ENCODE measurements at regions of chr1 and their contacts with region 1.

Region 1: GRCh38 chr1:39538588-39539465 is 37.8 kb downstream of the PABPC4 start:
- DNase-seq: peak; percentile 33
- H3K4me3 ChIP-seq: no peak overlapping the region
- H3K27ac ChIP-seq: no peak overlapping the region
- H3K27me3 ChIP-seq: no peaks in the 10 kb centered on the region
- CTCF ChIP-seq: peak; percentile 96

Region 2: DNA sequence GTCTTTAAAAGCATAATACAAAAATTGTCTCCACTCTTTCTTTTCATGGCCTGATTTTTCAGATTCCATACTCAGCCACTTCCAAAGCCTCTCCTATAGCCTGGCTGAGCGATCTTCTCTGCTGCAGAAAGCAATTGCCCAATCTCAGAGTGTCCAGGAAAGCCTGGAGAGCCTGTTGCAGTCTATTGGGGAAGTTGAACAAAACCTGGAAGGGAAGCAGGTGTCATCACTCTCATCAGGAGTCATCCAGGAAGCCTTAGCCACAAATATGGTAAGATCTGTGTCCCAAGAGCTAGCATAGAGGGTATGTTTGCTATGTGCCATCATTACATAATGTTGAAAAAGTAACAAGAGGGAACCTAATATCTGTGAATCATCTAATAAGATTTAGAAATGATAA is 178.1 kb before region 1 on chr1:
- CTCF ChIA-PET with region 1: interaction called, 15 read pairs
- POLR2A ChIA-PET with region 1: no interaction called
- DNase-seq: no peak
- H3K4me3 ChIP-seq: no peak overlapping the region
- H3K27ac ChIP-seq: no peak overlapping the region
- H3K27me3 ChIP-seq: no peaks in the 10 kb centered on the region
- CTCF ChIP-seq: no peak

Region 3: GRCh38 chr1:39425151-39425550 is 113.7 kb before region 1 on chr1:
- CTCF ChIA-PET with region 1: interaction called, 11 read pairs
- POLR2A ChIA-PET with region 1: no interaction called
- DNase-seq: no peak
- H3K4me3 ChIP-seq: no peak overlapping the region
- H3K27ac ChIP-seq: no peak overlapping the region
- H3K27me3 ChIP-seq: no peaks in the 10 kb centered on the region
- CTCF ChIP-seq: no peak

Region 4: DNA sequence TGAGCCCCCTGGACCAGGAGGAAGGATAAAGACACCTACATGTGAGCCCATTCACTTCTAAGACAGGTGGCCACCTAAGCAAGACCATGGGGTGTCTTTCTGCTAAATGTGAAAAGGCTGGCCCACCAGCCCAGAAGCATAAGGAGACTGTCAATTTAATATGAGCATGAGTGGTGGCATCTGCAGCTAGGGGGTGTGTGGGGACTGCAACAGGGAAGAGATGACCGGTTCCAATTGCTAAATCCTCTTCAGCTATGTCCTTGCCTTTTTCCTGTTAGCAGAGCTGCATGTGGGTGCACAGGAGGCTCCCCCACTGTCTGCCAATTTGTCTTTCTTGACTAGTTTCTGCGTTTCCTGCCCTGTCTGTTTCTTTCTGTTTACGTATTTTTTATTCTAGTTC is 69.7 kb before region 1 on chr1:
- CTCF ChIA-PET with region 1: interaction called, 18 read pairs
- POLR2A ChIA-PET with region 1: no interaction called
- DNase-seq: no peak
- H3K4me3 ChIP-seq: no peak overlapping the region
- H3K27ac ChIP-seq: no peak overlapping the region
- H3K27me3 ChIP-seq: no peaks in the 10 kb centered on the region
- CTCF ChIP-seq: no peak

Measured in AG04450 (cell line).